Activated naive CD4-positive, alpha-beta T cell treated with anti-CD3 and anti-CD28 coated beads for 36 hours (primary cell): ENCODE measurements at regions of chr10 and their contacts with region 1.

Region 1: GRCh38 chr10:59839588-59839987 is 66.8 kb downstream of the CCDC6 start:
- DNase-seq: no peak
- H3K4me3 Mint-ChIP-seq: no peak overlapping the region
- H3K27ac Mint-ChIP-seq: no peak overlapping the region
- H3K4me1 Mint-ChIP-seq: peaks cover 32% of the 10 kb centered on the region
- H3K27me3 Mint-ChIP-seq: no peaks in the 10 kb centered on the region

Region 2: GRCh38 chr10:59857921-59858320 is 18.3 kb after region 1 on chr10:
- CTCF ChIA-PET with region 1: no interaction called
- intact Hi-C with region 1: loop called (anchors 2 kb)
- DNase-seq: no peak
- H3K4me3 Mint-ChIP-seq: no peak overlapping the region
- H3K27ac Mint-ChIP-seq: no peak overlapping the region
- H3K4me1 Mint-ChIP-seq: peaks cover 50% of the 10 kb centered on the region
- H3K27me3 Mint-ChIP-seq: no peaks in the 10 kb centered on the region

Region 3: GRCh38 chr10:60008816-60009215 is 169.2 kb after region 1 on chr10:
- CTCF ChIA-PET with region 1: no interaction called
- intact Hi-C with region 1: no loop called
- DNase-seq: no peak
- H3K4me3 Mint-ChIP-seq: no peak overlapping the region
- H3K27ac Mint-ChIP-seq: no peak overlapping the region
- H3K4me1 Mint-ChIP-seq: no peaks in the 10 kb centered on the region
- H3K27me3 Mint-ChIP-seq: peaks cover 3% of the 10 kb centered on the region

Region 4: GRCh38 chr10:60023155-60023877 is 183.7 kb after region 1 on chr10:
- CTCF ChIA-PET with region 1: no interaction called
- intact Hi-C with region 1: no loop called
- DNase-seq: no peak
- H3K4me3 Mint-ChIP-seq: no peak overlapping the region
- H3K27ac Mint-ChIP-seq: no peak overlapping the region
- H3K4me1 Mint-ChIP-seq: no peaks in the 10 kb centered on the region
- H3K27me3 Mint-ChIP-seq: no peaks in the 10 kb centered on the region